CD8-positive, alpha-beta T cell (primary cell): ENCODE measurements at regions of chr16 and their contacts with region 1.

Region 1: DNA sequence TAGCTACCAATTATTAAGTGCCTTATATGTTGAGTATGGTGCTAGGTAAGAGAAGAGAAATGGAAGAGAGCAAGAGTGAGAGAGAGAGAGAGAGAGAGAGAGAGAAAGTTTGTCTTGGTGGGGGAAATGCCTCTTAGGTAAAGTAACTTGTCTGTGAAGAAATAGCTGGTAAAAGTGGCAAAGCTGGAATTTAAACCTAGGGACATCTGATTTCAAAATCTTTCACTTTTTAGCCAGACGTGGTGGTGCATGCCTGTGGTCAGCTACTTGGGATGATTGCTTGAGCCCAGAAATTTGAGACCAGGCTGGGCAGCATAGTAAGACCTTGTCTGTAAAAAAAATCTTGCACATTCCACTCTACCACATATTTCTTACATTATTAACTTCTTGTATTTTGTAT is 23.0 kb upstream of the CDR2 start:
- DNase-seq: no peak
- ATAC-seq: no peak
- H3K4me3 ChIP-seq: no peak overlapping the region
- H3K4me3 Mint-ChIP-seq: no peak overlapping the region
- H3K27ac ChIP-seq: no peak overlapping the region
- H3K27ac Mint-ChIP-seq: no peak overlapping the region
- H3K4me1 ChIP-seq: no peaks in the 10 kb centered on the region
- H3K4me1 Mint-ChIP-seq: no peaks in the 10 kb centered on the region
- H3K27me3 ChIP-seq: no peaks in the 10 kb centered on the region
- H3K27me3 Mint-ChIP-seq: no peaks in the 10 kb centered on the region
- CTCF ChIP-seq: no peak

Region 2: GRCh38 chr16:21565861-21566669 is 831.4 kb before region 1 on chr16:
- CTCF ChIA-PET with region 1: no interaction called
- POLR2A ChIA-PET with region 1: no interaction called
- intact Hi-C with region 1: loop called in 1 of 2 experiments (anchors 10 kb)
- DNase-seq: peak in 3 of 9 experiments; percentile 28 to 47 (median 30)
- ATAC-seq: peak; percentile 64
- H3K4me3 ChIP-seq: no peak overlapping the region
- H3K4me3 Mint-ChIP-seq: no peak overlapping the region
- H3K27ac ChIP-seq: no peak overlapping the region
- H3K27ac Mint-ChIP-seq: no peak overlapping the region
- H3K4me1 ChIP-seq: no peaks in the 10 kb centered on the region
- H3K4me1 Mint-ChIP-seq: peaks cover 5% of the 10 kb centered on the region
- H3K27me3 ChIP-seq: no peaks in the 10 kb centered on the region
- H3K27me3 Mint-ChIP-seq: peaks cover 5% of the 10 kb centered on the region
- CTCF ChIP-seq: no peak

Region 3: GRCh38 chr16:22386976-22387375 is 10.5 kb before region 1 on chr16:
- CTCF ChIA-PET with region 1: no interaction called
- POLR2A ChIA-PET with region 1: no interaction called
- intact Hi-C with region 1: no loop called
- DNase-seq: no peak
- ATAC-seq: no peak
- H3K4me3 ChIP-seq: no peak overlapping the region
- H3K4me3 Mint-ChIP-seq: no peak overlapping the region
- H3K27ac ChIP-seq: no peak overlapping the region
- H3K27ac Mint-ChIP-seq: no peak overlapping the region
- H3K4me1 ChIP-seq: peaks cover 4% of the 10 kb centered on the region
- H3K4me1 Mint-ChIP-seq: peaks cover 4% of the 10 kb centered on the region
- H3K27me3 ChIP-seq: no peaks in the 10 kb centered on the region
- H3K27me3 Mint-ChIP-seq: no peaks in the 10 kb centered on the region
- CTCF ChIP-seq: no peak